ENCODE measurements at regions of chr22 and their contacts with region 1.

Region 1: DNA sequence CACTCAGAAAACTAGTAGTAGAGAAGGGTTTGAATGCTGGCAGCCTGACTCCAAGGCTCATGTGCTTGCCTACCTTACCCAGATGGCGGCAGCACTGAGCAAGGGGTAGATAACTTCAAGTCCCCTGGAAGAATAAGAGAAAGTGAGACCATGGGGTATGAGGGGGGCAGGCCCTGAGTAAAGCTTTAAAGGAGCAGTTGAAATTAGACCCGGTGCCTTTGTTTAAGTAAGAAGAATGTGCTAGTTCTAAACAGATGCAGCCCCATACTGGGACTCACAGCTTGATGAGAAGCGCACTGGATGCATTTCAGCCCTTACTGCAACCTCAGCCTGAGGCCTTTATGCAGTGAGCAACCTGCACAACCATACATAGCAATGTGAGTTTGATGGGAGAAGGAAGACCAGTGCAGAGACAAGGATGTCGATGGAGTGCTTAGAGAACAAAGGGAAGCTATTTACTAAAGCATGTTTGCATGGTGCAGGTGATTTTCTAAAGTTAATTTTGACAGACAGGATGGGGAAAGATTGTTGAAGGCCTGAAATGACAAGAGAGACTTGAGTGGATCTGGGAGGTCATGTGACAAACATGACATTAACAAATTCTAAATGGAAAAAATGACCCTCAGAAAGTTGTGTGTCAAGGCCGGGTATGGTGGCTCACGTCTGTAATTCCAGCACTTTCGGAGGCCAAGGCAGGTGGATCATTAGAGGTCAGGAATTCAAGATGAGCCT is 27.1 kb upstream of the TMA7B start:
- DNase-seq: peak in 1 of 2 experiments; percentile 29
- H3K4me3 ChIP-seq: no peak overlapping the region
- H3K27ac ChIP-seq: no peak overlapping the region
- H3K4me1 ChIP-seq: no peaks in the 10 kb centered on the region
- H3K27me3 ChIP-seq: peaks cover 94% of the 10 kb centered on the region
- CTCF ChIP-seq: peak; percentile 87

Region 2: DNA sequence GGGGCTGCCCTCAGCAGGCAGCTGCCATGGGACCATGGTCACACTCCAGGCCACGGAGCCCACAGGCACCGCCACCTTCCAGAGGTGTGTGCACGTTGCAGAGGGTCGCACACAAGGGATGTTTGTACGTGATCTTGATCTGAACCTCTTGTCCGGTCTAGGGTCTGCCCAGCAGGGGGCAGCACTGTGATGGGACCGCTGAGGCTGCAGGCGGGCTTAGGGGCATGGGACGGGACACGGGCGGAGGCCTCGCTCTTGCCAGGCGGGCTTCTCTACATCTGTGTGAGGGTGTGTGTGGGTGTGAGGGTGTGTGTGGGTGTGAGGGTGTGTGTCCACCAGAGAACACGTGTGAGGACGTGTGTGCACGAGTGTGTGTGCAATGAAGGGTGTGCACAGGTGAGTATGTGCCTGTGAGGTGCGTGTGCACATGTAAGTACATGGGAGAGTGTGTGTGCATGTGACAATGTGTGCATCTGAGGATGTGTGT is 310.2 kb before region 1 on chr22:
- CTCF ChIA-PET with region 1: no interaction called
- POLR2A ChIA-PET with region 1: no interaction called
- intact Hi-C with region 1: loop called (anchors 10 kb)
- DNase-seq: peak in 1 of 2 experiments; percentile 65
- H3K4me3 ChIP-seq: no peak overlapping the region
- H3K27ac ChIP-seq: no peak overlapping the region
- H3K4me1 ChIP-seq: peaks cover 20% of the 10 kb centered on the region
- H3K27me3 ChIP-seq: no peaks in the 10 kb centered on the region
- CTCF ChIP-seq: peak; percentile 88

Region 3: GRCh38 chr22:40147388-40148176 is 214.5 kb after region 1 on chr22:
- CTCF ChIA-PET with region 1: no interaction called
- POLR2A ChIA-PET with region 1: interaction called, 13 read pairs
- intact Hi-C with region 1: no loop called
- DNase-seq: no peak
- H3K4me3 ChIP-seq: no peak overlapping the region
- H3K27ac ChIP-seq: no peak overlapping the region
- H3K4me1 ChIP-seq: 0 out of 2 replicates have a peak, but pooled peaks cover 4% of the 10 kb centered on the region
- H3K27me3 ChIP-seq: no peaks in the 10 kb centered on the region
- CTCF ChIP-seq: no peak